HepG2 (cell line): ENCODE measurements at regions of chr19 and their contacts with region 1.

Region 1: GRCh38 chr19:35066691-35067563 is 25.4 kb downstream of the HPN start:
- DNase-seq: peak; percentile 78
- ATAC-seq: peak; percentile 82
- H3K4me3 ChIP-seq: peak overlapping the region in 1 of 3 experiments; percentile 30; a peak in 1 of 6 replicates
- H3K27ac ChIP-seq: peak overlapping the region; percentile 31
- H3K4me1 ChIP-seq: peaks cover 20% of the 10 kb centered on the region
- H3K27me3 ChIP-seq: no peaks in the 10 kb centered on the region; a peak in 1 of 5 replicates
- CTCF ChIP-seq: peak; percentile 96
- EP300 ChIP-seq: no peak
- POLR2A ChIP-seq: peak in 1 of 2 experiments; percentile 31; a peak in 1 of 4 replicates
- RAD21 ChIP-seq: peak; percentile 90

Region 2: GRCh38 chr19:35090506-35091237 is 23.7 kb after region 1 on chr19:
- CTCF ChIA-PET with region 1: interaction called, 7 read pairs
- POLR2A ChIA-PET with region 1: no interaction called
- in situ Hi-C with region 1: no loop called
- intact Hi-C with region 1: loop called (anchors 2 kb)
- DNase-seq: peak; percentile 54
- ATAC-seq: peak; percentile 88
- H3K4me3 ChIP-seq: no peak overlapping the region
- H3K27ac ChIP-seq: no peak overlapping the region
- H3K4me1 ChIP-seq: peaks cover 24% of the 10 kb centered on the region
- H3K27me3 ChIP-seq: peaks cover 0 to 14% of the 10 kb centered on the region in 2 experiments; a peak in 3 of 5 replicates
- CTCF ChIP-seq: peak; percentile 68
- EP300 ChIP-seq: no peak
- POLR2A ChIP-seq: no peak
- RAD21 ChIP-seq: no peak

Region 3: DNA sequence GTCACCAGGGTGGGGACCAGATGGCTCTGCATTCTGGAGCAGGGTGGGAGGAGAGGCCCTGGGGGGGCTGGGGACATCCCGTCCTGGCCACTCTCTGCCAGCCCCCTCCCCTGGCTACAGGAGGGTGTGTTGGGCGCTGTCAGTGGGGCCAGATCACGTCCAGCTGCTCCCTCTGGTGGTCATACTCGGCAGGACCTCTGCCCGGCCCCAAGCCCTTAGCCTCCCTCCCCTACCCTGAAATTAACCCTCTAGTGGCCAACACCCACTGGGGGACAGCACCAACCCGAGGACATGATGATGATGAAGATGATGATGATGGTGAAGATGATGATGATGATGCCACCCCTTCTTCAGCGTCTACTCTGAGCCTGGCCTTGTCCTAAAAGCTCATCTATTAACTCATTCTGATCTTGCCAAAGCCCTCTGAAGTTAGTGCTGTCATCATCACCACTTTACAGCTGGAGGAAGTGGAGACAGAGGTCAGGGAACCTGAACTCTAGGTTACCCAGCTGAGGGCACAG is 68.5 kb after region 1 on chr19:
- CTCF ChIA-PET with region 1: interaction called, 4 read pairs
- POLR2A ChIA-PET with region 1: interaction called, 3 read pairs
- in situ Hi-C with region 1: loop called (anchors 5 kb)
- intact Hi-C with region 1: loop called (anchors 1 kb)
- DNase-seq: peak; percentile 65
- ATAC-seq: peak; percentile 50
- H3K4me3 ChIP-seq: no peak overlapping the region
- H3K27ac ChIP-seq: no peak overlapping the region
- H3K4me1 ChIP-seq: peaks cover 88% of the 10 kb centered on the region
- H3K27me3 ChIP-seq: no peaks in the 10 kb centered on the region
- CTCF ChIP-seq: peak; percentile 96
- EP300 ChIP-seq: no peak
- POLR2A ChIP-seq: no peak
- RAD21 ChIP-seq: peak; percentile 87